HCT116 (cell line): ENCODE measurements at regions of chr4 and their contacts with region 1.

Region 1: GRCh38 chr4:77413766-77414165 is 191.9 kb upstream of the CXCL13 start:
- DNase-seq: no peak
- ATAC-seq: no peak
- H3K4me3 ChIP-seq: no peak overlapping the region
- H3K27ac ChIP-seq: no peak overlapping the region
- H3K4me1 ChIP-seq: no peaks in the 10 kb centered on the region
- H3K27me3 ChIP-seq: peaks cover 53% of the 10 kb centered on the region; the same call in 1 of the 2 replicates
- CTCF ChIP-seq: no peak
- POLR2A ChIP-seq: no peak
- RAD21 ChIP-seq: no peak

Region 2: GRCh38 chr4:77393996-77394395 is 19.8 kb before region 1 on chr4:
- CTCF ChIA-PET with region 1: no interaction called
- POLR2A ChIA-PET with region 1: no interaction called
- RAD21 ChIA-PET with region 1: no interaction called
- intact Hi-C with region 1: loop called (anchors 1 kb)
- DNase-seq: no peak
- ATAC-seq: no peak
- H3K4me3 ChIP-seq: no peak overlapping the region
- H3K27ac ChIP-seq: no peak overlapping the region
- H3K4me1 ChIP-seq: no peaks in the 10 kb centered on the region
- H3K27me3 ChIP-seq: no peaks in the 10 kb centered on the region
- CTCF ChIP-seq: no peak
- POLR2A ChIP-seq: no peak
- RAD21 ChIP-seq: no peak

Region 3: DNA sequence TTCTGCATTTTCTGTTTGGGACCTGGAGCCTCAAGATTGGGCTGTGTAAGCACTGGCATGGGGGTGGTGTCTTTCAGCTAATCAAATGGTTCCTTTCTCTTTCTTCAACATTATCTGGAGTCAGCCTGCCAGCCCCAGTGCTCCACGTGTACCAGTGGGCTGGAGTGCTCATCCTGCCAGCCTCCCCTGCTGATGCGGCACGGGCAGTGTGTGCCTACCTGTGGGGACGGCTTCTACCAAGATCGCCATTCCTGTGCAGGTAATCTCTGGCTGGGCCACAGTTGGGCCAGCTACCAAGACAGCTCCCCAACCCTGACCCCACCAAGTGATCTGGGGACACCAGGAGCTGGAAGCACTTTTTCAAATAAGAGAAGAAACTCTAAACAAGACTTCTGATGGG is 872.5 kb after region 1 on chr4:
- CTCF ChIA-PET with region 1: no interaction called
- POLR2A ChIA-PET with region 1: no interaction called
- RAD21 ChIA-PET with region 1: no interaction called
- intact Hi-C with region 1: no loop called
- DNase-seq: no peak
- ATAC-seq: no peak
- H3K4me3 ChIP-seq: no peak overlapping the region
- H3K27ac ChIP-seq: no peak overlapping the region
- H3K4me1 ChIP-seq: no peaks in the 10 kb centered on the region
- H3K27me3 ChIP-seq: no peaks in the 10 kb centered on the region
- CTCF ChIP-seq: no peak
- POLR2A ChIP-seq: no peak
- RAD21 ChIP-seq: no peak